GM12878 (cell line): ENCODE measurements at regions of chr6 and their contacts with region 1.

Region 1: DNA sequence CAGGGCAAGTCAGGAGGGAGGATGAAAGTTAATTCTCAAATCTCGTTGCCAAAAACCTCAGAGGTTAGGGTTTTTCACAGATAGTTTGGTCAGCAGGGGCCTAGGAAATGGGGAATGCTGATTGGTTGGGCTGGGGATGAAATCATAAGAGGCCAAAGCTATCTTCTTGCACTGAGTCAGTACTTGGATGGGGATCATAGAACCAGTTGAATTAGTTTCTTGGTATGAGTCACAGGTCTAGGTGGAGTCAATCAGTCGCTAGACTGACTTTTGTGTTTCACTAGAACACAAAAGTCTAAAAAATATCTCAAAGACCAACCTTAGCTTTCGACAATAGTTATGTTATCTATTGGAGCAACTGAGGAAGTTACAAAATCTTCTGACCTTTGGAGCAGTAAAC is 368.5 kb downstream of the TBC1D32 start:
- DNase-seq: no peak
- ATAC-seq: peak; percentile 90
- H3K4me3 ChIP-seq: no peak overlapping the region
- H3K27ac ChIP-seq: no peak overlapping the region
- H3K4me1 ChIP-seq: no peaks in the 10 kb centered on the region
- H3K27me3 ChIP-seq: no peaks in the 10 kb centered on the region
- CTCF ChIP-seq: no peak
- EP300 ChIP-seq: no peak
- POLR2A ChIP-seq: no peak
- RAD21 ChIP-seq: no peak

Region 2: GRCh38 chr6:120622127-120622631 is 343.6 kb before region 1 on chr6:
- CTCF ChIA-PET with region 1: no interaction called
- POLR2A ChIA-PET with region 1: interaction called, 10 read pairs
- RAD21 ChIA-PET with region 1: no interaction called
- SMC1A ChIA-PET with region 1: no interaction called
- in situ Hi-C with region 1: no loop called
- intact Hi-C with region 1: no loop called
- DNase-seq: no peak
- ATAC-seq: no peak
- H3K4me3 ChIP-seq: no peak overlapping the region
- H3K27ac ChIP-seq: no peak overlapping the region
- H3K4me1 ChIP-seq: no peaks in the 10 kb centered on the region
- H3K27me3 ChIP-seq: no peaks in the 10 kb centered on the region
- CTCF ChIP-seq: no peak
- EP300 ChIP-seq: no peak
- POLR2A ChIP-seq: no peak
- RAD21 ChIP-seq: no peak